ENCODE measurements at regions of chr16 and their contacts with region 1.

Region 1: DNA sequence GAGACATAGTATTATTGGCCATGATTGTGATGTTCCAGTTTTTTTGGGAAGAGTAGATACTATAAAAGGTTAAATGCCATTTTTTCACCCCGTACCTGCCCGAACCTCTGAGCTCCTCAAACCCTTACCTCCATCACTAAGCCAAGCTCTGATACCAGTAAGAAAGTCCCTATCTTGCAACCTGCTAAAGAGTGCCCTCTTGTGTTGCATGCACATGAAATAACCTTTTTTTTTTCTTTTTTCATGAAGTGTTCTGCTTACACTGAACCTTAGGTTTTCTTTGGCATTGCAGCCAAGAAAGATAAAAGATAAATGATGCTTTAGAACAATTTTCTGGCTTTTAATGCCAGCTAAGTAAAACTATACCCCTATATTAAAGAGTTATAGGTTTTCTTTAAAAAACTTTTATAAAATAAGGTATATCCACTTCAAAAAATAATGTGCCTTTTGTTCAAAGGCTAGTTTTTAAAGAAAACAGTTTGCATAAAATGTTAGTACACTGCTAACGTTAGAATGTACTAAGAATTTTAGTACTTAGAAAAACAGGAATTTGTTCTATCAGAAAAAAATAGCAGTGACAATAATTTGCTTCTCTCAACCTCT is 295.3 kb upstream of the PMFBP1 start:
- DNase-seq: no peak
- ATAC-seq: peak; percentile 51
- H3K4me3 Mint-ChIP-seq: no peak overlapping the region
- H3K27ac Mint-ChIP-seq: no peak overlapping the region
- H3K4me1 Mint-ChIP-seq: peaks cover 4% of the 10 kb centered on the region
- H3K27me3 Mint-ChIP-seq: no peaks in the 10 kb centered on the region

Region 2: DNA sequence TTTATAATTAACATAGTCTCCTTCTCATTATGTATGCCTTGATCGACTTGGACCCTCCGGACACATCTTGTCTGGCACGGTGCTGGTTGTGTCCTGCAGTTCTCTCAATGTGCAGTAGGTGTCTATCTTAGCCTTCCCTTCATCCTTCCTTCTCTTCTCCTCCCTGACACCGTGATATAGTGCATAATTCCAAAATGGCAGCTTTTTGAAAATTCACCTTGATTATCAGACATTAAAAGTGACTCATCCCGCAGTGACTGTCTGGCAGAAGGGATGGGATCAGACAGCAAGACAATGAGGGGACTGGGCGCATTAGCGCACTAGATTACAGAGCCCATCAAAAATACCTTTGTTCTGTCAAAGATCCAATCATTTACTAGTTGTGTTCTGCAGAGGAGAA is 225.3 kb before region 1 on chr16:
- CTCF ChIA-PET with region 1: no interaction called
- POLR2A ChIA-PET with region 1: no interaction called
- intact Hi-C with region 1: loop called (anchors 5 to 10 kb)
- DNase-seq: no peak
- ATAC-seq: peak; percentile 42
- H3K4me3 Mint-ChIP-seq: no peak overlapping the region
- H3K27ac Mint-ChIP-seq: no peak overlapping the region
- H3K4me1 Mint-ChIP-seq: peaks cover 4% of the 10 kb centered on the region
- H3K27me3 Mint-ChIP-seq: peaks cover 4% of the 10 kb centered on the region

Region 3: DNA sequence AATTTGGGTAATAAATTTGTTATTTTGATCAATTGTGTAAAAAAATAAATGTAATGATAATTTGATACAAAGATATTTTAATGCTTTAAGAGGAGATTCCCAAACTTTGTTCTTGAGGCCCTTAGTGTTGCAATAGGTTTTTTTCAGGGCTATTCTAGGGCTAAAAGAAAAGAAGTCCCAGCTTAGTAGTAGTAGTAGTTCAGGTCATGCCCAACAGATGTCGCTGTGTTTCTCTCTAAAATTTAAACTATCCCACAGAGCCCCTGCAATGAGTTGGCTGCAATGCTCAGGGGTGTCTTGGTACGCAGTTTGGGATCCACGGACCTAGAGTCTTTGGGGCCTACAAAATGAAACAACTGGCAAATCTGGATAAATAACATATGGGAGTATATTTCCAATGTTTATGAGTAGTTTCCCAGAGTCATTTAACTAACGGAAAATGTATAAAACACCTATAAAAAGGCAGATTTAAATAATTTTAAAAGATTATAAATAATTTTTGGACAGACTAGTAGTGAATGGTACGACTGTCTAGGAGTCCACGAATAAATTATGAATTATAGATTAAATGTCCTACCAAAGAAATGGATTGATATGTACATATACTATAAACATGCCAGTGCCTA is 66.9 kb before region 1 on chr16:
- CTCF ChIA-PET with region 1: interaction called, 7 read pairs
- POLR2A ChIA-PET with region 1: no interaction called
- intact Hi-C with region 1: loop called in 1 of 2 experiments (anchors 1 kb)
- DNase-seq: peak; percentile 41
- ATAC-seq: peak; percentile 53
- H3K4me3 Mint-ChIP-seq: no peak overlapping the region
- H3K27ac Mint-ChIP-seq: no peak overlapping the region
- H3K4me1 Mint-ChIP-seq: no peaks in the 10 kb centered on the region
- H3K27me3 Mint-ChIP-seq: no peaks in the 10 kb centered on the region

Region 4: DNA sequence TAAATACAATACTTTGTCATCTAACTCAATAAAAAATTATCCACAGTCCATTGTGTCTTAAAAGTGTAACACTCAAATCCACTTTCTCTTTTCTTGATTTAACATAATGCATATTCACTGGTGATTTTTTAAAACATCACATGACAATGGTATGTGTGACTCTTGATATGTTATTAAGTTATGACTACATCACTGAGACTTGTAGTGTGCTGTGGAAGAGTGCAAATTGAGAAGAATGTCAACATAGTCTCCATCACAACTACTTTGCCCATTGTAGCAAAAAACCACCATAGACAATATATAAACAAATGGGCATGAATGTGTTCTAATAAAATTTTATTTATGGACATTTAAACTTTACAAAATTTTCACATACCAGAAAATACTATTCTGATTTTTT is 85.4 kb after region 1 on chr16:
- CTCF ChIA-PET with region 1: no interaction called
- POLR2A ChIA-PET with region 1: no interaction called
- intact Hi-C with region 1: no loop called
- DNase-seq: no peak
- ATAC-seq: no peak
- H3K4me3 Mint-ChIP-seq: no peak overlapping the region
- H3K27ac Mint-ChIP-seq: no peak overlapping the region
- H3K4me1 Mint-ChIP-seq: no peaks in the 10 kb centered on the region
- H3K27me3 Mint-ChIP-seq: no peaks in the 10 kb centered on the region

Region 5: GRCh38 chr16:72829846-72830775 is 362.9 kb after region 1 on chr16:
- CTCF ChIA-PET with region 1: no interaction called
- POLR2A ChIA-PET with region 1: no interaction called
- intact Hi-C with region 1: no loop called
- DNase-seq: no peak
- ATAC-seq: peak; percentile 36
- H3K4me3 Mint-ChIP-seq: no peak overlapping the region
- H3K27ac Mint-ChIP-seq: no peak overlapping the region
- H3K4me1 Mint-ChIP-seq: no peaks in the 10 kb centered on the region
- H3K27me3 Mint-ChIP-seq: no peaks in the 10 kb centered on the region